Mammary epithelial cell (primary cell): ENCODE measurements at regions of chr17 and their contacts with region 1.

Region 1: GRCh38 chr17:82236142-82236981 is 7.5 kb downstream of the SLC16A3 start:
- DNase-seq: peak; percentile 37
- H3K4me3 ChIP-seq: no peak overlapping the region
- H3K27ac ChIP-seq: no peak overlapping the region
- H3K4me1 ChIP-seq: peaks cover 82% of the 10 kb centered on the region
- H3K27me3 ChIP-seq: no peaks in the 10 kb centered on the region
- CTCF ChIP-seq: peak; percentile 67 to 84

Region 2: GRCh38 chr17:82320956-82321927 is 84.9 kb after region 1 on chr17:
- CTCF ChIA-PET with region 1: no interaction called
- dilution Hi-C with region 1: no loop called
- in situ Hi-C with region 1: no loop called
- intact Hi-C with region 1: loop called (anchors 1 kb)
- DNase-seq: no peak
- H3K4me3 ChIP-seq: peak overlapping the region in 1 of 3 experiments; percentile 21
- H3K27ac ChIP-seq: no peak overlapping the region
- H3K4me1 ChIP-seq: peaks cover 16% of the 10 kb centered on the region
- H3K27me3 ChIP-seq: no peaks in the 10 kb centered on the region
- CTCF ChIP-seq: peak; percentile 42 to 73

Region 3: GRCh38 chr17:82332669-82333278 is 96.4 kb after region 1 on chr17:
- CTCF ChIA-PET with region 1: no interaction called
- dilution Hi-C with region 1: no loop called
- in situ Hi-C with region 1: loop called in 1 of 2 experiments (anchors 10 kb)
- intact Hi-C with region 1: no loop called
- DNase-seq: peak; percentile 46
- H3K4me3 ChIP-seq: peak overlapping the region in 2 of 3 experiments; percentile 18 to 46
- H3K27ac ChIP-seq: no peak overlapping the region
- H3K4me1 ChIP-seq: peaks cover 46% of the 10 kb centered on the region
- H3K27me3 ChIP-seq: no peaks in the 10 kb centered on the region
- CTCF ChIP-seq: no peak